GM10248 (cell line): ENCODE measurements at regions of chr3 and their contacts with region 1.

Region 1: DNA sequence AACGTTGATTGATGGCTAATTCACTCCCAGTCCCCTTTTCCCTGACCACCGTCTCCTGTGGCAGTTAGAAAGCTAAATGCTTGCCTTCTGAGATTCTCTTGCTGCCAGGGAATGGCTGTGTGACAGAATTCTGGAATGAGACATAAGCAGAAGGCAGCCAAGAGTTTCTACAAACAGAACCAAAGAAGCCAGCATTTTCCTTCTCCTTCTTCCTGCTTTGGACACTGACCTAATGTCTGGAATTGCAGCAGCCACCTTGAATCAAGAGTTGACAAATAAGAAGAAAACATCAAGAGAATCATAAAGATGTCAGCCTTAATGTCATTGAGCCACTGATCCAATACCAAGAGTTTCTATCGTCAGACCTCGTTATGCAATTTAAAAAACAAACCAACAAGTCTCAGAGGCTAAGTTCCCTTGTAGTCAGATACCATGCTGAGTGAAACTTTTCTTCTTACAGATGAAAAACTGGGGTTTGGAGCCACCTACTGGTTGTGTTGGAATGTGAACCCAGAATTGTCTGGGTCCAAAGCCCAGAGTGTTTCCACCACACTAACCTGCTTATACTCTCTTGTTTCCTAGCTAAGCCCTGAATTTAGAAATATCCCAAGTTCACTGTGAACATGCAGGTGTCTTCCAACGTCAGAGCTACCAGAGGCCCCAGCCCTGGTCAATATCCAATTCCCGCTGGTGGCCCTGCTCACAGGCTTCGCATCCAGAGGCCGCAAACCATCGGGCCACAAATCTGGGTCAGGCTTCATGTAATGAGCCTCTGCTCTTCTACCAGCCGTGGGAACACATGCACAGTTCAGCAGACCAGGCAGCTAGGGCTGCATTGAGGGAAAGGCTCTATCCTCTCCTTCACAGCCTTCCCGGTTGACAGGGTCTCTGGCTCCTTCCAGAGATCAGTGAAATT is 42.5 kb downstream of the MCF2L2 start:
- DNase-seq: peak; percentile 62
- CTCF ChIP-seq: peak; percentile 65

Region 2: GRCh38 chr3:183116025-183116614 is 269.8 kb before region 1 on chr3:
- CTCF ChIA-PET with region 1: interaction called, 132 read pairs
- POLR2A ChIA-PET with region 1: no interaction called
- DNase-seq: peak; percentile 86
- CTCF ChIP-seq: no peak

Region 3: DNA sequence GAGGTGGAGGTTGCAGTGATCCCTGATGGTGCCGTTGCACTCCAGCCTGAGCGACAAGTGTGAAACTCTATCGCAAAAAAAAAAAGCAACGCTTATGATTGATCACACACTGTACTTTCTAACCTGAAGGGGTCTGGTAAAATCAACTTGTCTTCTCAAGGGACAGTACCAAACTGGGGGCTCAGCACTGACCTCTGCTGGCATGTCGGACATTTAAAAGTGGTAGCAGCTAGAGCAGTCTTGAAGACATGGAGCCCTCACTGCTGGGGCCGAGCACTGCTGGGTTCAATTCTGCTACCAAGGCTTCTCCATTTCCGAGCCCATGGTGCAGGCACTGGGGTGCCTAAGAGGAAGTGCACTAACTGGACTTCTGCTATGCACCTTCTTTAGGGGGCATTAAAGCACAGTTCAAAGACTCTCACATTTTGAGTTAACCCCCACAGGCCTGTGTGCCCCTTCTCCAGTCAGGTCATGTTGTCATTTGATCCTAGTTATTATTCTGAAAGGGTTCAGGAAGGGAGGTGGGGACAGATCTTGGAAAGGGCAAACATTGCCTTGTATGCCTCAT is 197.0 kb before region 1 on chr3:
- CTCF ChIA-PET with region 1: interaction called, 144 read pairs
- POLR2A ChIA-PET with region 1: no interaction called
- DNase-seq: peak; percentile 60
- CTCF ChIP-seq: peak; percentile 45

Region 4: DNA sequence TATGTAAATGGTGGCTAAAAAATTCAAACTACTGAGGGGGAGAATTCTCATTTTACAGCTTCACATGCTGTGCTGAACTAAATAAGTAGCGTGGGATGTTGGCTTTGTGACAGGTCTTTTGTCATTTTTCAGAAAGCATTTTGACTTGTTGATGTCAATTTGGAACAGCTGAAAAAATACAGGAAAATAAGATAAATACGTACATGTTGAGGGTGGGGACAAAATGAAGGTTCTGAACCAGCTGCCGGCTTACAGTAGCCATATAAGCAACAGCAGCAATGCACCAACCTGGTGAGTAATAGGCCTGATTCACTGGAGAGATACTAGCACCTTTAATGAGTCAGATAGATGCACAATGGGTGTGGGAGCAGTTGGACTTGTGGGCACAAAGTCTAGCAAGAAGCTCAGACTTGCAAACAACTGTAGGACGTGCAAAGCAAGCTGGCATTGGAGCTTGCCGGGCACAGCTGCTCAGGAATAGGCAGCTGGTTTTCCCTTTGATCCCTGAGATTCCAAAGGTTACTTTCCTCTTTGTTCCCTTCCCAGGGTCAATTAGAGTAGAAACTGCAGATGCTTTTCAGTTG is 120.0 kb before region 1 on chr3:
- CTCF ChIA-PET with region 1: no interaction called
- POLR2A ChIA-PET with region 1: no interaction called
- DNase-seq: no peak
- CTCF ChIP-seq: no peak

Region 5: DNA sequence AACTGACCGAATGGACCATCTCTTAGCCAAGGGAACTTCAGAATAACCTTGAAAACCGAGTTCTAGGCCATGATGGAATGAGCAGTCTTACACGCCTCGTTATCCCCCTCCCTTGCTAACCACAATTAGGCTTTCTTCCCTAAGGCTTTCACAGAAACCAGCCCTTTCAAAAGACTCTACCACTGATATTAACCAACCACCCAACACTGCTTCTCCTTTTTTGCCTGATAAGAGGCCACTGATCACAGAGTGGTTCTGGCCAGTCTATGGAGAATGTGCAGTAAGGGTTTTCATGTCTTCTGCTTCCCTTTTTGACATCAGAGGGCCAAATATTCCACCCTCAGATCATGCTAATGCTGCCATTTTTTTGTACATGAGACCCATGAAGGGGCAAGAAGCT is 16.8 kb before region 1 on chr3:
- CTCF ChIA-PET with region 1: interaction called, 33 read pairs
- POLR2A ChIA-PET with region 1: no interaction called
- DNase-seq: no peak
- CTCF ChIP-seq: no peak

Region 6: DNA sequence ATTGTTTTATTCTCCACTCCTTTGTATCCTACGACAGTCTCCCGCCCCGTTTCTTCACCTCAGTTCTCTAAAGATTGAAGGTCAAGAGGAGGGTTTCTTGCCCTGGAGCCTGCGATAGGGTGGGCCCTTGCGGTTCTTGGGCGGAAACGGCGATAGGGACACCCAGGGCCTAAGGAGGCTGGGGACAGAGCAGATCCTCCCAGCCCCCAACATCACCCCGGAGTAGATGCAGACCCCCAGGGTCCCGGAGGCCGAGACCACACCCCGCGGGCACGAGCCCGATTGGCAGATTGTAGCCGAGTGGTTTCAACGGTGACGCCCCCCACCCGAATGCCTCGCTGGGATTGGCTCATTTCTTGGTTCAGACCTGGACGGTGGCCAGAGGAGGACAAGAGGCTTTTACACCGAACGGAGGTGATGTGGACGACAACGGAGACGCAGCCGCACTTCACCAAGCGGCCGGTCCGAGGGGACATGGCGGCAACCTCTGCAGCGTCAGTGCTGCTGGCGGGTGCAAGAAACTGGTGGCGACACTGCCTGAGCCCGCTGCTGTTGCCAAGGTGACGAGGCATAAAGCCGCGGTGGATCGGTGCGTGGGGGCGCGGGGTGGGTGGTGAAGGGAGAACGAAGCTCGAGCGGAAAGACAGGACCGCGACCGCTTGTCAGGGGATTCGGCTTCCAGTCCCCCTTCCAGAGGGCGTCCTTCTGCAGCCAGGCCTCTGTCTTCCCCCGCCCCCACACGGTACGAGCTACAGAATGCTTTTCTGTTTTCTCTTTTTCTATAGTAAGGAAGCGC is 61.4 kb after region 1 on chr3:
- CTCF ChIA-PET with region 1: no interaction called
- POLR2A ChIA-PET with region 1: no interaction called
- DNase-seq: peak; percentile 90
- CTCF ChIP-seq: peak; percentile 0